PC-9 (cell line): ENCODE measurements at regions of chr18 and their contacts with region 1.

Region 1: DNA sequence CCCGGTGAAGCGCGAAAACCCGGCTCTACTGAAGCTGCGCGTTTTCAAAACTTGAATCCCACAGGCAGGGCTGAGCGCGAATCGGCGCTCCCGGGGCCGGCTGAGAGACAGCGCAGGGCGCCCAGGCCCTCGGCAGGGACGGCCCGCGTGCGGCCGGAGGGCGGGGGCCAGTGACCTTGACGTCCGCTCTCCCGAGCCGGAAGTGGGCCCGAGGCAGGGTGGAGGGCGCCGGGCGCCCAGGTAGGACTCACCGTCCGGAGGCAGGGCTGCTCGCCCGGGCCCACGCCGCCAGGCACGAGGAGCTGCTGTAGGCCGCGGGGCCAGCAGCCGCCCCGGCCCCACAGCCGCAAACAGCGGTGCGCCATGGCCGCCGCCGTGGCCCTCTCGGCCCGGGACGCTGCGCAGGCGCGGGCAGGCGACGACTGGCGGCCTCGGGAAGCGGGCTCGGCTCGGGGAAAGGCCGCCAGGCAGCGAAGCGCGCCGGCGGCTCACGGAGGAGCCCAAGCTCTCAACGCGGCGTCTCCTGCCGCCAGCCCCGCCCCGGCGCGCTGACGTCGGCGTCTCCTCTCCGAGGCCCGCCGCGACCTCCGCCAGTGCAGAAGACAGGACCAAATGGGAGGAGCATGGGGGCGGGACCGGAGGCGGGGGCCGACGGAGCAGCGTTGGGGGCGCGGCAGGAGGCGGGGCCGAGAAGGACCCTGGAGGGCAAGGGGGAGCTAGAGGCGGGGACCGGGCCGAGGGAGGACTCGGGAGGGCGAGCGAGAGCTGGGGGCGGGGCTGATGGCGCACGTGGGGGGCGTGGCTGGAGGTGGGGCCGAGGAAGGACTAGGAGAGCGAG is at the start of gene AFG3L2:
- DNase-seq: peak; percentile 92 to 100
- H3K4me3 ChIP-seq: peak within 1 kb of the TSS; percentile 86
- H3K27ac ChIP-seq: peak within 1 kb of the TSS; percentile 87
- H3K4me1 ChIP-seq: peaks cover 33% of the 10 kb centered on the region
- H3K27me3 ChIP-seq: no peaks in the 10 kb centered on the region
- CTCF ChIP-seq: no peak
- total RNA-seq, gene AFG3L2: 69.4 and 71.1 TPM in 2 replicates

Region 2: DNA sequence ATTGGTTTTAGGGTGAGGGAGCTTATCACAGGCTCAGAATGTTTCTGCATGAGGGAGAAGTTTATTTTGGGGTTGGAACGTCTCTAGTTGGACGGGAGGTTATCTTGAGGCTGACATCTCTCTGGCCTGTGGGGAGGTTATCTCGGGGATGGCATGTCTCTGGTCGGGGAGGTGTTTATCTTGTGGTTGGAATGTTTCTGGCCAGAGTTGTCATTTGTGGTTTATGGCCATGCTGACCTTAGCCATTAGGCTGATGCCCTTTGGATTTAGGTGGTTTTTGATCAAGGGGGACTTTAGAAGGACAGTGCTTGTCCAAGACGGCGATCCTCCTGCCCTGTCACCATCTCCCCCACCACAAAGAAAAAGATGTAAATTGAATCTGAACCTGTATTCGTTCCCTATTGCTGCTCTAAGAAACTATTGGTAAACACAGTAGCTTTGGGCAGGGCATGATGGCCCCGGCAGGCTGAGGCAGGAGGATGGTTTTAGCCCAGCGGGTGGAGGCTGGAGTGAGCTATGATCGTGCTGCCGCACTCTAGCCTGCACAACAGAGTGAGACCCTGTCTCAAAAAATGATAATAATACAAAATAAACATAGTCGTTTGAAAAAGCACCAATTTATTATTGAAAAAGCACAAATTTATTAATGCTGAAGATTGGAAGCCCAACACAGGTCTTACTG is 451.0 kb before region 1 on chr18:
- CTCF ChIA-PET with region 1: no interaction called
- POLR2A ChIA-PET with region 1: no interaction called
- intact Hi-C with region 1: no loop called
- DNase-seq: no peak
- H3K4me3 ChIP-seq: no peak overlapping the region
- H3K27ac ChIP-seq: no peak overlapping the region
- H3K4me1 ChIP-seq: no peaks in the 10 kb centered on the region
- H3K27me3 ChIP-seq: no peaks in the 10 kb centered on the region
- CTCF ChIP-seq: no peak

Region 3: DNA sequence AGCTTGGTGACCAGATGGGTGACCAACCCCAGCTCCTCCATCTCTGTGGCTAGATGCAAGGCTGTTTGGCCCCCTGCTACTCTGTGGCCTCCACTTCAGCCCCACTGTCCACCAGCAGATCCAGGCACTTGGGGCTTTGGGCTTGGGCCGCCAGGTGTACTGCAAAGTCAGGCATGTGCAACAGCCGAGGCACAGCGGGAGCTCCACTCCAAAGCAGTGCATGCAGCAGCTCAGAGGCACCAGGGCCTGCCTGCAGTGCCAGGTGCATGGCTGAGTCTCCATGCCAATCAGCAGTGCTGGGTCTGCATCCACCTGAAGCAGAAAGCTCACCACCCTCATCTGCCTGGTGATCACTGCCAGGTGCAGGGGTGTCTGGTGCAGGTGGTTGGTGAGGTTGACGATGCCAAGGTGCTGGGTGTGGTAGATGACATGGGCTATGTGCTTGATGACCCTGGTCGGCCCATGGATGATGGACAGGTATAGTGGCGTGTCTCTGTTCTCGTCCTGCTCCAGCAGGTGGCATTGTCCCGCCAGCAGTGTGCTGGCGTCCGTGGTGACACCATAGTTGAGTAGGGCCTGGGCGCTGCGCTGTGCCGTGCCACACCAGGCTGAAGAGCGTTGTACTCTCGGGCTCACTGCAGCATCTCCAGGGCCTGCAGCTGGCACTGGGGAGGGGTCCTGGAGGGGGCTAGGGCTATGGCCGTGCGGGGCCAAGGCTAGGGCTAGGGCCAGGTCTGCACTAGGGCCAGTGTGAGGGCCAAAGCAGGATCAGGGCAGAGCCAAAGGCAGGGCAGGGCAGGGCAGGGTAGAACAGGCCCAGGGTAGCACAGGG is 284.3 kb before region 1 on chr18:
- CTCF ChIA-PET with region 1: no interaction called
- POLR2A ChIA-PET with region 1: interaction called, 5 read pairs
- intact Hi-C with region 1: loop called (anchors 2 kb)
- DNase-seq: peak; percentile 41 to 73
- H3K4me3 ChIP-seq: no peak overlapping the region
- H3K27ac ChIP-seq: no peak overlapping the region
- H3K4me1 ChIP-seq: no peaks in the 10 kb centered on the region
- H3K27me3 ChIP-seq: no peaks in the 10 kb centered on the region
- CTCF ChIP-seq: peak; percentile 79

Region 4: GRCh38 chr18:12336875-12337274 is 40.1 kb before region 1 on chr18:
- CTCF ChIA-PET with region 1: no interaction called
- POLR2A ChIA-PET with region 1: interaction called, 3 read pairs
- intact Hi-C with region 1: loop called (anchors 1 kb)
- DNase-seq: peak; percentile 74 to 91
- H3K4me3 ChIP-seq: no peak overlapping the region; the same call in 1 of the 2 replicates
- H3K27ac ChIP-seq: peak overlapping the region; percentile 48
- H3K4me1 ChIP-seq: peaks cover 32% of the 10 kb centered on the region
- H3K27me3 ChIP-seq: no peaks in the 10 kb centered on the region
- CTCF ChIP-seq: no peak

Region 5: GRCh38 chr18:12657684-12658425 is 280.9 kb after region 1 on chr18 and contains the start of gene SPIRE1:
- CTCF ChIA-PET with region 1: no interaction called
- POLR2A ChIA-PET with region 1: no interaction called
- intact Hi-C with region 1: loop called (anchors 5 kb)
- DNase-seq: peak in 1 of 2 experiments; percentile 79
- H3K4me3 ChIP-seq: peak within 1 kb of the TSS; percentile 86
- H3K27ac ChIP-seq: no peak within 1 kb of the TSS
- H3K4me1 ChIP-seq: peaks cover 29% of the 10 kb centered on the region
- H3K27me3 ChIP-seq: no peaks in the 10 kb centered on the region
- CTCF ChIP-seq: no peak
- total RNA-seq, gene SPIRE1: 26.1 and 36.4 TPM in 2 replicates

Region 6: GRCh38 chr18:13159579-13159978 is 782.6 kb after region 1 on chr18:
- CTCF ChIA-PET with region 1: no interaction called
- POLR2A ChIA-PET with region 1: no interaction called
- intact Hi-C with region 1: no loop called
- DNase-seq: peak in 1 of 2 experiments; percentile 39
- H3K4me3 ChIP-seq: no peak overlapping the region
- H3K27ac ChIP-seq: no peak overlapping the region
- H3K4me1 ChIP-seq: no peaks in the 10 kb centered on the region
- H3K27me3 ChIP-seq: peaks cover 17% of the 10 kb centered on the region; the same call in 1 of the 2 replicates
- CTCF ChIP-seq: peak; percentile 92